ENCODE measurements at regions of chr17 and their contacts with region 1.

Region 1: DNA sequence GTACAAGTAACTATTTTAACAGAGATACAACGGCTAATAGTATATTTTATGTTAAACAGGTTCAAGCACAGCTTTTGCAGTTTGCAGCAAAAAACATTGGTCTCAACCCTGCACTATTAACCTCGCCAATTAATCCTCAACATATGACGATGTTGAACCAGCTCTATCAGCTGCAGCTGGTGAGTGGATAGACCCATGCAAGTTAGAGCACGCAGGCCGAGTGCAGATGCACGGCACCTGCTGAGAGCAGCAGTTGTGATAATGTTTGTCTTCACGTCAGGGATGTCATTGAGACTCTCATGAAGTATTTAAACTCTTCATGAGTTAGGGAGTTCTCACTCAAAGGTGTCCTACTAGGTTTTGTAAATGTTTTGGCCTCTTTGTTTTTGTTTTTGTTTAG is 45.6 kb downstream of the TMC6 start:
- DNase-seq: no peak
- H3K4me3 Mint-ChIP-seq: no peak overlapping the region
- H3K27ac Mint-ChIP-seq: no peak overlapping the region
- H3K4me1 Mint-ChIP-seq: peaks cover 17% of the 10 kb centered on the region
- H3K27me3 Mint-ChIP-seq: no peaks in the 10 kb centered on the region

Region 2: DNA sequence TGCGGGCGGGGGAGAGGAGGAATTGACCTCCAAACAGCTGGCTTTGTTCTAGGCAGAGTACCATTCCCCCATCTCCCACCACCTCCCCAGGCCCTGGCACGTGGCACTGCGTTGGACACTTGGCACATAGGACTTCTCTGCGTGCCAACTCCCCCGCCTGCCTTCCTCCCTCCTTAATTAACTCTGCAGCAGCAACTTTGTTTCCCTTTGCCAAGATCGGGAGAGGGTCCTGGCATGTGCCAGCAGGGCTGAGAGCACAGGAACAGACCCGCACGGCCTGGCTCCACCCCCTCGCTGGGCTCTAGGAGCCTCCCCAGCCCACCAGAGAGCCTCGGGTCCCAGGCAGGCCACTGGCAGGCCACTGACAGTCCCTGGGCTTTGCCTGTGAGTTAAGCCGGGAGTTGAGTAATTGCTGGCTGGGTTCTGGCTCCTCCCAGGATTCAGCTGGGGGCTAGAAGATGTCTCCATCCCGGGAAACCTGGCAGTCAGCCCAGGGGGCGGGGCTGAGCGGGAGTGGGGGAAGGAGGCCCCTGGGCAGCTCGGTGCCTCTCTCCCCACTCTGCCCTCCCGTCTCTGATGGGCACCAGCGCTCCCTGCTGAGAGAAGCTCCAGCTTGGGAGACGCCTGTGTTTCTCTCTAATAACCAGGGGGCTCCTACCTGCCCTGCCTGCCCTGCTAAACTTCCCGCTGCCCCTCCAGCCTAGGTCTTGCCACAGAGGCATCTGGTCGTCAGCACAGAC is 348.5 kb before region 1 on chr17:
- CTCF ChIA-PET with region 1: no interaction called
- POLR2A ChIA-PET with region 1: no interaction called
- DNase-seq: no peak
- H3K4me3 Mint-ChIP-seq: no peak overlapping the region
- H3K27ac Mint-ChIP-seq: no peak overlapping the region
- H3K4me1 Mint-ChIP-seq: no peaks in the 10 kb centered on the region
- H3K27me3 Mint-ChIP-seq: peaks cover 46% of the 10 kb centered on the region

Region 3: GRCh38 chr17:77952368-77952767 is 130.6 kb before region 1 on chr17:
- CTCF ChIA-PET with region 1: no interaction called
- POLR2A ChIA-PET with region 1: no interaction called
- DNase-seq: no peak
- H3K4me3 Mint-ChIP-seq: no peak overlapping the region
- H3K27ac Mint-ChIP-seq: no peak overlapping the region
- H3K4me1 Mint-ChIP-seq: peaks cover 11% of the 10 kb centered on the region
- H3K27me3 Mint-ChIP-seq: peaks cover 76% of the 10 kb centered on the region

Region 4: GRCh38 chr17:78019367-78019975 is 63.5 kb before region 1 on chr17:
- CTCF ChIA-PET with region 1: interaction called, 35 read pairs
- POLR2A ChIA-PET with region 1: no interaction called
- DNase-seq: no peak
- H3K4me3 Mint-ChIP-seq: peak overlapping the region; percentile 57
- H3K27ac Mint-ChIP-seq: peak overlapping the region; percentile 83
- H3K4me1 Mint-ChIP-seq: peaks cover 26% of the 10 kb centered on the region
- H3K27me3 Mint-ChIP-seq: no peaks in the 10 kb centered on the region

Region 5: GRCh38 chr17:78072961-78073360 is 10.0 kb before region 1 on chr17:
- CTCF ChIA-PET with region 1: interaction called, 16 read pairs
- POLR2A ChIA-PET with region 1: no interaction called
- DNase-seq: no peak
- H3K4me3 Mint-ChIP-seq: no peak overlapping the region
- H3K27ac Mint-ChIP-seq: no peak overlapping the region
- H3K4me1 Mint-ChIP-seq: no peaks in the 10 kb centered on the region
- H3K27me3 Mint-ChIP-seq: no peaks in the 10 kb centered on the region

Region 6: DNA sequence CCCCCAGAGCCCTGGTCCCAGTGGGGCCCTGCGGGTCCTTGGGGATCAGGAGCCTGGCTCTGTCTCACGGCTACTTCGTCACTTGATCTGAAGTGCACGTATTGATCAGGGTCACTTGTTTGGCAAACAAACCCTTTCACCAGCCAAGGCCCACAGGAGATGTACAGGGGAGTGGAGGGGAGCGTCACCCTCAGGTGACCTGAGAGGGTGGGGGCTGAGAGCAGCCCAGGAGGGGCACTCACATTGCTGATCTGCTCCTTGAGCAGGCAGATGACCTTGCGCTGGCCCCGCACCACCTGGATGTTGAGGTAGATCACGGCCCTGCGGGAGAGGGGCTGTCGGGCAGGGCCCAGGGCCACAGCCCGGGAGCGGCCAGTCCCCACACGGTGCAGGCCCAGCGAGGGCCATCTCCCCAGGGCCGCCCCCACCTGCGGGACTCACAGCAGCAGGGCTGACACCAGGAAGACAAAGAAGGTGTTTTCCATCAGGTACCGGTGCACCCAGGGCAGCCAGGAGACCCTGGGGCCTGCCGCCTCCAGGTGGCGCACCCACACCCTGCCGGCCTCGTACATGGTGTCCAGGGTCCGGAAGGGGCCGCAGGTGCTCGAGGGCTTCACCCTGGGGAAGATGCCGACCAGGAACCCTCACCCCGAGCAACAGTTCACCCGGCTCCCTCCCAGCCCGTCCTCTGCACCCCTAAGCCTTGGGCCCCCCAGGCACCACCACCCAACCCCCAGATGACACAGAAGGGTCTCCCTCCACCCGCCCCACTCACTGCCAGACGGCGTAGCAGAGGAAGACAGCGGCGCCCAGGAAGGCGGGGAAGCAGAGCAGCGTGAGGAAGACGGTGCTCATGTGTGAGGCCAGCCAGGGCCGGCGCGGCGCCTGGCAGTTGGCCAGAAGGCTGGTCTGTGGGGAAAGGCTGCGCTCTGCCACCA is 34.3 kb after region 1 on chr17:
- CTCF ChIA-PET with region 1: no interaction called
- POLR2A ChIA-PET with region 1: no interaction called
- DNase-seq: no peak
- H3K4me3 Mint-ChIP-seq: no peak overlapping the region
- H3K27ac Mint-ChIP-seq: no peak overlapping the region
- H3K4me1 Mint-ChIP-seq: peaks cover 63% of the 10 kb centered on the region
- H3K27me3 Mint-ChIP-seq: no peaks in the 10 kb centered on the region

Region 7: GRCh38 chr17:78140169-78140976 is 57.4 kb after region 1 on chr17:
- CTCF ChIA-PET with region 1: interaction called, 12 read pairs
- POLR2A ChIA-PET with region 1: no interaction called
- DNase-seq: peak; percentile 99
- H3K4me3 Mint-ChIP-seq: peak overlapping the region; percentile 15
- H3K27ac Mint-ChIP-seq: peak overlapping the region; percentile 82
- H3K4me1 Mint-ChIP-seq: peaks cover 66% of the 10 kb centered on the region
- H3K27me3 Mint-ChIP-seq: no peaks in the 10 kb centered on the region

Region 8: DNA sequence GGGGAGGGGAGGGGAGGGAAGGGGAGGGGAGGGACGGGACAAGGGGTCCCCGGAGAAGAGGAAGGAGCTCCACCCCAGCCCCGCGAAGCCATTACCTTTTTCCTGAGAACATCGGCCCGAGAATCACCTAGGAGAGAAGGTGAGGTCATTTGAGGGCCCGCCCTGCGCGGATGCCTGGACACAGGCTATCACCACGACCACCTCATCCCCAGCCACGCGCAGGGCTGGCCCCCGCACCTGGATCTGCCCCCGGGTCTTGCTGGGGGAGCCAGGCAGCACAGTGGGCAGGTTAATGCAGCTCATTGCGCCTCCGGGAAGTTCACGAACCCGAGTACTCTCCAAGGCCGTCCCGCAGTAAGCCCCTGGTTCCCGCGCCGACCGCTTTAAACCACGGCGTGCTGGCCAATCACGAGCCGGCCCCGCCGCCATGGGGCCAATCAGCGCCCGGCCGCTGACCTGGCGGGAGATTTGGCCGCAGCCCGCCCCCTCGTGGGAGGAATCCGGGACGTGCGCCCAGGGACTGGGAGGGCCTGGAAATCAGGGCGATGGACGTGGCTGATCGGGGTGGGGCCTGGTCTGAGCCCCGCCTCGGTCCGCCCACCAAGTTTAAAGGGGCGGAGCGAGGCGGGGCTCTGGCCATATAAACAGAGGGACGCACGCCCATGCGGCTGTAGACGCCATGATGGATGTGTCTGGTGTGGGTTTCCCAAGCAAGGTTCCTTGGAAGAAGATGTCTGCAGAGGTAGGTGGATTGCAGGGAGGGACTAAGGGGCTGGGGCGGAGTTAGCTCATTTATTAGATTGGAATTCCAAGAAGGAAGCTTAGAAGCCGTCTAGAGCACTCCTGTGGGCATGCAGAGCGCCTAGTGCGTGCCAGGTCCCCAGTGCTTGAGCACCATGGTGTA is 104.0 kb after region 1 on chr17 and contains the starts of genes AFMID and TK1:
- CTCF ChIA-PET with region 1: interaction called, 10 read pairs
- POLR2A ChIA-PET with region 1: no interaction called
- DNase-seq: peak; percentile 96
- H3K4me3 Mint-ChIP-seq: peak within 1 kb of the TSS; percentile 78
- H3K27ac Mint-ChIP-seq: peak within 1 kb of the TSS; percentile 67
- H3K4me1 Mint-ChIP-seq: peaks cover 51% of the 10 kb centered on the region
- H3K27me3 Mint-ChIP-seq: no peaks in the 10 kb centered on the region
- total RNA-seq, gene AFMID: 9.2 to 14.0 TPM
- total RNA-seq, gene TK1: 109 to 117 TPM

Measured in activated CD4-positive, alpha-beta memory T cell treated with anti-CD3 and anti-CD28 coated beads, Interleukin-2, amount 10 ng/mL, durations not matched to agents 7 days and 5 days (primary cell).